Activated CD4-positive, alpha-beta T cell treated with anti-CD3 and anti-CD28 coated beads for 36 hours (primary cell): ENCODE measurements at regions of chr5 and their contacts with region 1.

Region 1: GRCh38 chr5:35830587-35830986 is 26.1 kb upstream of the IL7R start:
- DNase-seq: no peak
- ATAC-seq: peak; percentile 8
- H3K4me3 Mint-ChIP-seq: peak overlapping the region; percentile 30
- H3K27ac Mint-ChIP-seq: peak overlapping the region; percentile 91
- H3K4me1 Mint-ChIP-seq: peaks cover 93% of the 10 kb centered on the region
- H3K27me3 Mint-ChIP-seq: no peaks in the 10 kb centered on the region

Region 2: DNA sequence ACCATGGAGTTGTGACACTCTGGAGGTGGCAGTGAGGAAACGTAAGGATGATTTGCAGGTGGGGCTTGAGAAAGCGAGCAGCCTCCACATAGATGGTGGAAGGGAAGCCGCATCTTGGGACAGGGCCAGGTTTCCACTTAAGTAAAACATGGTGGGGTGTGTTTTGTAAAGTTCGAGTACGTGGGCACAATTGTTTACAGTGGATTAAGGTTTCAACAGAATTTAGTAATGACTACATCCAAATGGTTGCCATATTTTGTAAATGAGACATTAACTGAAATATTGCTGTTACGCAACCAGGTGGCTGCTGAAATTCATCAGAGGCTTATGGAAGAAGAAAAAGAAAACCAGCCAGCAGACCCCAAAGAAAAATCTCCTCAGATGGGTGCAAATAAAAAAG is 59.3 kb before region 1 on chr5:
- CTCF ChIA-PET with region 1: interaction called, 4 read pairs
- POLR2A ChIA-PET with region 1: no interaction called
- intact Hi-C with region 1: loop called in 1 of 2 experiments (anchors 1 kb)
- DNase-seq: no peak
- ATAC-seq: no peak
- H3K4me3 Mint-ChIP-seq: no peak overlapping the region
- H3K27ac Mint-ChIP-seq: no peak overlapping the region
- H3K4me1 Mint-ChIP-seq: peaks cover 53% of the 10 kb centered on the region
- H3K27me3 Mint-ChIP-seq: no peaks in the 10 kb centered on the region

Region 3: GRCh38 chr5:35785601-35786085 is 44.9 kb before region 1 on chr5:
- CTCF ChIA-PET with region 1: interaction called, 6 read pairs
- POLR2A ChIA-PET with region 1: interaction called, 5 read pairs
- intact Hi-C with region 1: loop called (anchors 2 kb)
- DNase-seq: peak; percentile 73
- ATAC-seq: peak; percentile 84
- H3K4me3 Mint-ChIP-seq: peak overlapping the region; percentile 43
- H3K27ac Mint-ChIP-seq: peak overlapping the region; percentile 96
- H3K4me1 Mint-ChIP-seq: peaks cover 89% of the 10 kb centered on the region
- H3K27me3 Mint-ChIP-seq: no peaks in the 10 kb centered on the region

Region 4: DNA sequence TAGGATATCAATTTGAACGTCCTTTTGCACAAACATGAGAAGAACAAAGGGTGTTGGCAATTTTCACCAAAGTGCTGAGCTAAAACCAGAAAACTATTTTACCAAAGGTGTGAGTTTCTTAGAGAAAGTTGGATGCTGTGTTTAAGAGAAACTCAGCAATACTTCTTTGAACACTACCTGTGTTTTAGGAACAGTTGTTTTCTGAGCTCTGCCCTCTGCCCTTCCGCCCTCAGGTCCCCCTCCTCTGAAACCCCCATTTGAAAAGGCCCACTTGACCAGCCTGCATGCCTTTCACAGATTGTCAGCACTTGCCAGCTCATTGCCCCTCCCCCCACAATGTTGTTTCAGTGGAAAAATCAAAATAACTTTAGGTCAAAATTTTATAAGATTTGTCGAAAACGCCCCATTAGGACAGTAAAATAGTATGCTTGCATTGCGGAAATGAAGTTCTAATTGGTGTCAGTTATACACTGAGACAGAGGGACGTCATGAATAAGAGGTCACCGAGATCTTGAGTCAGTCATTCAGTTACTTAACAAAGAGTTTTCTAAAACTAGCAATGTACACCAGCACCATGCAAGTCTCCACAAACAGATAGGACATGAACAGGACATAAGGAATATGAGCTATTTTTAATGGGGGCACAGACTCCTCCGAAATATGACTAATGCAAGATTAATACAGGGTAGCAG is 35.8 kb before region 1 on chr5:
- CTCF ChIA-PET with region 1: interaction called, 5 read pairs
- POLR2A ChIA-PET with region 1: interaction called, 13 read pairs
- intact Hi-C with region 1: loop called in 1 of 2 experiments (anchors 2 kb)
- DNase-seq: peak; percentile 45
- ATAC-seq: peak; percentile 40
- H3K4me3 Mint-ChIP-seq: peak overlapping the region; percentile 25
- H3K27ac Mint-ChIP-seq: peak overlapping the region; percentile 91
- H3K4me1 Mint-ChIP-seq: peaks cover 90% of the 10 kb centered on the region
- H3K27me3 Mint-ChIP-seq: no peaks in the 10 kb centered on the region